ENCODE measurements at regions of chr10 and their contacts with region 1.

Region 1: DNA sequence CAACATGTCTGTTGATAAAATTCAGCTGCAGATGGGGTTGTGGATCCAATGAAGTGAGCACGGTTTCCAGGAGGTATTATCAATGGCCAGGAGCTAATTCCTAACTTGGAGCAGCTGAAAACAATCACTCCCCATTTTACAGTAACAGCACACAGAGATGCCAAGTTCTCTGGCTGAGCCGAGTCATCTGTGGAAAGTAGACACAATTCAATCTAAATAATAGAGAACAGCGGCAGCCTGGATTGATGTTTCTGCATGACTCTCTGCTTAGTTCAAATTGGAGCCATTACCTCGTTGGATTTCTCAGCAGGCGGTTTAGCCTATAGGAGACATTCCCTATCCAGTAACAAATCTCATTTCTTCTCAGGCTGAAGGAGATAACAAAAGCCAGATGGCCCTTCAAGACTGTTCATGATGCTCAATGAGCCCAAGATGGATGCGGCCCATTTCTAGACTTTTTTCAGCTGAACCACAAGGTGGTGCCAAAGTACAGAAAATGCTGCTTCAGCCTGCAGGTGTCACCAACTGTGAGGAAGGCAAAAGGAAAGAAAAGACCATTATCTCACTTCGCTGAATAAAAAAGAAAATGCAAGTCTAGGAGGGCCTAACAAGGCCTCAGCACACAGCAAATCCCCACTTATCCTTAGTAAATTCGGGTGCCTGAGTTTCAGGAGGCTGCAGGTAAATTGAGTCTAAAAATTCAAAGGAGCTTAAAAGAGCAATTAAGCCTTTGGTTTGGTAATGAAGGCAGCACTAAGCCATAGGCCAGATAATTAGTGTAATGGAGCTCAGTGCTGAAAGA is 83.7 kb downstream of the SLC16A9 start:
- DNase-seq: peak; percentile 73
- H3K4me3 ChIP-seq: peak overlapping the region; percentile 15 to 37; a peak in 3 of 4 replicates
- H3K27ac ChIP-seq: peak overlapping the region; percentile 31 to 86; a peak in 3 of 4 replicates
- H3K4me1 ChIP-seq: peaks cover 0 to 2% of the 10 kb centered on the region in 2 experiments; a peak in 1 of 4 replicates
- H3K27me3 ChIP-seq: no peaks in the 10 kb centered on the region
- CTCF ChIP-seq: peak; percentile 92
- EP300 ChIP-seq: peak; percentile 45 to 71; a peak in 2 of 4 replicates
- RAD21 ChIP-seq: peak; percentile 98

Region 2: DNA sequence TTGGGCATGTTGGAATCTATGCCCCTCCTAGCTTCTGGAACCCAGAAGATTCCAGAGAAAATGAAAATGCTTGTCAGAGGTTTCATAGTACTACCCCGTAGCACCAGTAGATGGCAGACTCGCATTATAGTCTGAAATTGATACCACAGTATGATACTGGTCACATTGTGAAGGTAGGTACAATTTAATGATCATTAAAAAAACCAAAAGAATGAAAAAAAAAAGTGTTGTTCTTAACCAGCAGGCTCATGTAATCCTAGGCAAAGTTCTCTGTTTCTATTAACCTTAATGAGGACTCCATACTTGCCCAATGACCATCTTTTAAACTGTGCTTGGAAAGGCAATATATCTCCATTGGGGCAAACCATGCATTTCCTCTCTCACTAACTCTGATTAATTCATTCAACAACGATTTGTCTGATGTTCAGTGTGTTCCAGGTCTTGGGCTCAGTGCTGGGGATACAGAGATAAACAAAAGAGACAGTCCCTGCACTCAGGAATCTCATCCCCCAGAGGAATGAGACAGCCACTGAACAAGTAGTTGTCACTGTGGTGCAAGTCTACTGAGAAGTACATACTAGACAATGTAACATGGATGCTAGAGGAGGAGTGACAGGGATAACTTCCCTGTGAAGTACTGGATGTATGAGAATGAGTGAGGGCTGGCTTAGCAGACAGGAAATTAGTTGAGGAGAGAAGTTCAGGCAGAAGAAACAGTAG is 673.0 kb before region 1 on chr10:
- CTCF ChIA-PET with region 1: interaction called, 23 read pairs
- POLR2A ChIA-PET with region 1: no interaction called
- DNase-seq: peak; percentile 36
- H3K4me3 ChIP-seq: no peak overlapping the region; a peak in 1 of 4 replicates
- H3K27ac ChIP-seq: no peak overlapping the region
- H3K4me1 ChIP-seq: peaks cover 6 to 7% of the 10 kb centered on the region in 2 experiments
- H3K27me3 ChIP-seq: no peaks in the 10 kb centered on the region
- CTCF ChIP-seq: peak; percentile 87
- EP300 ChIP-seq: 0 out of 4 replicates have a peak, but pooled peaks of 1 of the 2 experiments have one; percentile 6
- RAD21 ChIP-seq: peak; percentile 95

Region 3: GRCh38 chr10:59245686-59246085 is 380.2 kb before region 1 on chr10:
- CTCF ChIA-PET with region 1: interaction called, 19 read pairs
- POLR2A ChIA-PET with region 1: no interaction called
- DNase-seq: no peak
- H3K4me3 ChIP-seq: no peak overlapping the region
- H3K27ac ChIP-seq: no peak overlapping the region
- H3K4me1 ChIP-seq: no peaks in the 10 kb centered on the region; a peak in 1 of 4 replicates
- H3K27me3 ChIP-seq: no peaks in the 10 kb centered on the region
- CTCF ChIP-seq: no peak
- EP300 ChIP-seq: no peak
- RAD21 ChIP-seq: no peak

Region 4: DNA sequence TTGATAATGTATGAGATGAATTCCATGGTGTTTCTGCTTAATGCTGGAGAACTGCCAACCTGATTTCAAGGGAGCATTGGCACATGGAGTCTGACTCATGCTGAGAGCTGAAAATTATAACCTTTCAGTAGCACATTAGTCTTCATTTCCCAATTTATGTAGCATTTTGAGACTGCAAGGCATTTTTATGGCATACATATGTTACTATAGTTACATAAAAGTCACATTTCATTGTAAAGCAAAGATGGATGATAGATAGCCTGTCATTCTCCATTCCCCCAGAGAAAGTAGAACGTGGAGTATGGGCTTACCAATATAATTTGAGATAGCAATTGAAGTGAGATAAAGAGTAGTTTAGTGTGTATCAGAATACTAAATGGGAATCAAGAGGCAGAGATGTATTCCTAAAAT is 19.4 kb before region 1 on chr10:
- CTCF ChIA-PET with region 1: interaction called, 17 read pairs
- POLR2A ChIA-PET with region 1: no interaction called
- DNase-seq: peak; percentile 55
- H3K4me3 ChIP-seq: no peak overlapping the region
- H3K27ac ChIP-seq: peak overlapping the region; percentile 11 to 72; a peak in 3 of 4 replicates
- H3K4me1 ChIP-seq: peaks cover 13 to 14% of the 10 kb centered on the region in 2 experiments
- H3K27me3 ChIP-seq: no peaks in the 10 kb centered on the region
- CTCF ChIP-seq: no peak
- EP300 ChIP-seq: peak; percentile 56 to 93; a peak in 3 of 4 replicates
- RAD21 ChIP-seq: peak; percentile 29; the same call in 1 of the 2 replicates

Region 5: GRCh38 chr10:59817773-59818172 is 191.9 kb after region 1 on chr10:
- CTCF ChIA-PET with region 1: interaction called, 21 read pairs
- POLR2A ChIA-PET with region 1: no interaction called
- DNase-seq: no peak
- H3K4me3 ChIP-seq: no peak overlapping the region
- H3K27ac ChIP-seq: no peak overlapping the region
- H3K4me1 ChIP-seq: no peaks in the 10 kb centered on the region
- H3K27me3 ChIP-seq: no peaks in the 10 kb centered on the region
- CTCF ChIP-seq: no peak
- EP300 ChIP-seq: no peak
- RAD21 ChIP-seq: no peak